Right cardiac atrium (tissue), 5 donors: ENCODE measurements at regions of chr18 and their contacts with region 1.

Region 1: DNA sequence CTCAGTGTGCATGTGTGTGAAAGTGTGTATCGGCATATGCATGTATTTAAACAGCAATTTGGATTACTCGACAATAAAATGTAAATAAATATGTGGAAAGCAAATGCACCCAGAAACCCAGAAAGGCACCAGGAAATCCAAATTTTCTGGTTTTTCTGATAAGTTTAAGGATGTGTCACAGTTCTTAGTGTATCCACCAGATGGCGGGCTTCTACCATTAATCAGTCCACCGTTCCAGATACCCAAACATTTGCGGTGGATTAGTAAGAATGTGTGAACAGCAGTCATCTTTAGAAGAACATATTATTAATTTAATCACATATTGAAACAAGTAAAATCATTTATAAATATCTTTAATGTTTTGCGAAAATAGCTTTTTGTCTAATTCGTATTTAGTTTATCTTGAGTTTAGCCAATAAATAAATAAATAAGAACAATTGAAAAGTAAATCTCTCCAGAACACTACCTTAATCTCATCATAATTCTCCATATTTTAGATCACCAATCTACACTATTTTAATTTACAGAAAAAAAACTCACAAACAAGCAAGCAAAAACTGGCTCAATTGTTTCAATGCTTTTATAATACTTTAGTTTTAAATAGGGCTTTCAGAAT is 298.9 kb downstream of the DSEL start:
- DNase-seq: no peak
- ATAC-seq: peak; percentile 62 to 71
- H3K4me3 ChIP-seq: no peak overlapping the region
- H3K27ac ChIP-seq: no peak overlapping the region
- H3K4me1 ChIP-seq: no peaks in the 10 kb centered on the region
- H3K27me3 ChIP-seq: no peaks in the 10 kb centered on the region

Region 2: DNA sequence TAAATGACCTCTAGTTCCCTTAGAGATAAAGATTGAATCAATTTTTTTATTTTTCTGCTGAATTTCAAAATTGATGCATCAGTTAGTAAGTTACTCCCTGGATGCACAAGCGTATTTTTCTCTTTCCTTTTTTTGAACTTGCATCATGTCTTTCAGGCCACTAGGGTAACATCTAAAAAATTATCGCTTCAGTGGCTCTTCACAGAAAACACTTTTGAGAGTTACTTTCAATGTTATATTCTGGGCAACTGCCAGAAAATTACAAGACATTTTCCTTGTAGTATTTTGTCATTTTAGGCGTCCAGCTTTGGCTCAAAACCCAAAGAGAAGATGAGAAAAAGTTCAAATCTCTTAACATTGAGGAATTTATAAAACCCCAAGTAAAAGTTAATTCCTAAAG is 239.1 kb after region 1 on chr18:
- intact Hi-C with region 1: no loop called
- DNase-seq: no peak
- ATAC-seq: no peak
- H3K4me3 ChIP-seq: no peak overlapping the region
- H3K27ac ChIP-seq: no peak overlapping the region
- H3K4me1 ChIP-seq: no peaks in the 10 kb centered on the region
- H3K27me3 ChIP-seq: no peaks in the 10 kb centered on the region

Region 3: DNA sequence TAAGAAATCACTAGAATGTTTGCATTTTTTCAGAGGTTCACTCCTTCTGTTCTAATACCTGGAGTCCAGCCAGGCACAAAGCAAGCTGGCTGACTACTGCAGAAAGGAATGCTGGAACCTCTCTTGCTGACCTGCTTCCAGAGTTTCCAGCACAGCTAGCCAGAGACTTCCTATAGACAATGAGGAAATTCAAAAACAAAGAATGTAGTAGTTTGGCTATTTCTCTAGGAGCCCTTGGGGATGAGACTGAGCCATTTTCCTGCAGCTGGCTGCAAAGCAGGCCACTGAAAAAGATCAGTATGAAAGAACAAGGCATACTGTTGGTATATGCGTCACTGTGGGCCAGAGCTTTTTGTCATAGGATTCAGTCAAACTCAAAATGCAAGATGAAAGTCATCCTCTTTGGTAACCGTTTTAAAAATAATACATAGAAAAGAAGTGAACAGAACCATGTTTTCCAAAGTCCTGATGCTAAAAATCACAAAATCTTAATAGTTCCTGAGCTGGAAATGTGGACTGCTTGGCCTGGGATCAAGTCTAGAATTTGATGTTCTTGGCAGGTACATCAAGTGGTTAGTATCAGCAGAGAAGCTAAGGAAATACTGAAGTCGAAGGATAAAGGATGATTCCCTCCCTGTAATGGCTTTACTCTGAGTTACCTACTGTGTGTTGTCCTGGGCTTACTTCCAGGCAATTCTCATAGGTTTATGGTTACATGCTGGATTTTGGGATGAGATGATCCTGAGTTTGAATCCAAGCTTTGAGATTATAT is 307.9 kb after region 1 on chr18:
- intact Hi-C with region 1: no loop called
- DNase-seq: peak; percentile 54 to 72 (median 68)
- ATAC-seq: peak; percentile 90 to 92
- H3K4me3 ChIP-seq: no peak overlapping the region
- H3K27ac ChIP-seq: no peak overlapping the region
- H3K4me1 ChIP-seq: no peaks in the 10 kb centered on the region
- H3K27me3 ChIP-seq: no peaks in the 10 kb centered on the region

Region 4: DNA sequence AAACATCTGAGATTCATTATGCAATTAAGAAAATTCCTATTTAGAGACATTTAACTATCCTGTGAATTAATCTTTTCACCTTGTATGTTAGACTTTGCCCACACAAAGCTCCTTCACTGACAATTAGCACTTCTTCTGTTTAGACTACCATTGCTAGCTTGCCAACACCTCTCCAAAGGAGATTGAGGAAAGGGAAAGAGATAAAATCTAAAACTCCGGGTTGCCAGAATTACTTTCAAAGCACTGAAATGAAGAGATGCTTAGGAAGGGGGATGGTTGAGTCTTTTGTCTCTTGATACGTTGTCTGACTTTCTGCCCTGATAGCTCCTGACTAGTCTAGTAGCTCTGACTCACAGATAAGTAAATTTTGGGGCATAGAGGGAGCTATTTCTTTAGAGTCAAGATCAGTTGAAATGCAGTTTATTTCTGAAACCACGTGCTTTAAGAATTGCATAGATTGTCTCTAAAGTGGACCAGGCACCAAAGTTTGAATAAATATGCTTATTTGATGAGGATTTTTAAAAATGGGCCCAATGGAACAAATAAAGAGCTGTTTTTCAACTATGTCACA is 373.0 kb after region 1 on chr18:
- intact Hi-C with region 1: no loop called
- DNase-seq: no peak
- ATAC-seq: no peak
- H3K4me3 ChIP-seq: no peak overlapping the region
- H3K27ac ChIP-seq: no peak overlapping the region
- H3K4me1 ChIP-seq: no peaks in the 10 kb centered on the region
- H3K27me3 ChIP-seq: no peaks in the 10 kb centered on the region

Region 5: GRCh38 chr18:68648191-68648590 is 1430.5 kb after region 1 on chr18:
- intact Hi-C with region 1: loop called in 2 of 4 experiments (anchors 5 to 10 kb)
- DNase-seq: no peak
- ATAC-seq: no peak
- H3K4me3 ChIP-seq: no peak overlapping the region
- H3K27ac ChIP-seq: no peak overlapping the region
- H3K4me1 ChIP-seq: no peaks in the 10 kb centered on the region
- H3K27me3 ChIP-seq: no peaks in the 10 kb centered on the region

Region 6: GRCh38 chr18:68660354-68661183 is 1442.9 kb after region 1 on chr18:
- intact Hi-C with region 1: loop called in 3 of 4 experiments (anchors 5 to 10 kb)
- DNase-seq: no peak
- ATAC-seq: no peak
- H3K4me3 ChIP-seq: no peak overlapping the region
- H3K27ac ChIP-seq: no peak overlapping the region
- H3K4me1 ChIP-seq: no peaks in the 10 kb centered on the region
- H3K27me3 ChIP-seq: no peaks in the 10 kb centered on the region